ENCODE measurements at regions of chr13 and their contacts with region 1.

Region 1: GRCh38 chr13:99033814-99034213 is 56.0 kb upstream of the DOCK9 start:
- DNase-seq: no peak
- ATAC-seq: no peak
- H3K4me3 ChIP-seq: no peak overlapping the region
- H3K4me1 ChIP-seq: no peaks in the 10 kb centered on the region
- CTCF ChIP-seq: no peak

Region 2: DNA sequence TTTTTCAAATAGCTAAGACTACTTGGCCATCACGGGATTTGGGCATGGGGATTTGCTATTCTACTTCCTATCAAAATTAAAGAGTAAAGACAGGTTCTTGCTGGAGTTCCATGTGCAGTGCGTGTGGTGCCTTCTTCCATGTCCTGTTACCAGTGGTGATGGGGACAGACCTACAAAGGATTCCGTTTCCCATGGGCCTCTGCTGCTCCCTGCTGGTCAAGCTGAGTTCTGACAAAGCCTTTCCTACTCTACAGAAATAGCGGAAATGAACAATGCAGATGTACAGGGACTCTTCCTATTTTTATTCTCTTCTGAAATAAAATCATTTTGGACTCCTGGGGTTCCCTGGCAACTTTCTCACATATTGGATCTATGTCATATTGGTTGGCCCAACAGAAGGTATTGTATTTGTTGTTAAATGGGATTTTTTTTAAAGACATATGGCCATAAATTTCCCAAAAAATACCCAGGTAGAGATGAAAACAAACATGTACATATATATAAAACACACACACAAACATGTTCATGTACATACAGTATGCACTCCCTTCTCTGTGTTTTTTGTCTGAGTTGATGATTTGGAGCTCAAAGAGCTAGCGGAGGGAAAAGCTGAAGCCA is 190.8 kb before region 1 on chr13:
- intact Hi-C with region 1: loop called in 1 of 2 experiments (anchors 10 kb)
- DNase-seq: peak; percentile 62 to 82 (median 72)
- ATAC-seq: peak; percentile 92
- H3K4me3 ChIP-seq: no peak overlapping the region
- H3K4me1 ChIP-seq: no peaks in the 10 kb centered on the region
- CTCF ChIP-seq: peak; percentile 66